Activated CD8-positive, alpha-beta memory T cell treated with anti-CD3 and anti-CD28 coated beads, Interleukin-2, amount 10 ng/mL, durations not matched to agents 7 days and 5 days (primary cell): ENCODE measurements at regions of chr11 and their contacts with region 1.

Region 1: GRCh38 chr11:46529095-46529905 is 64.5 kb downstream of the AMBRA1 start:
- DNase-seq: peak; percentile 85
- ATAC-seq: peak; percentile 92
- H3K4me3 Mint-ChIP-seq: no peak overlapping the region
- H3K27ac Mint-ChIP-seq: peak overlapping the region; percentile 3
- H3K4me1 Mint-ChIP-seq: peaks cover 14% of the 10 kb centered on the region
- H3K27me3 Mint-ChIP-seq: no peaks in the 10 kb centered on the region

Region 2: DNA sequence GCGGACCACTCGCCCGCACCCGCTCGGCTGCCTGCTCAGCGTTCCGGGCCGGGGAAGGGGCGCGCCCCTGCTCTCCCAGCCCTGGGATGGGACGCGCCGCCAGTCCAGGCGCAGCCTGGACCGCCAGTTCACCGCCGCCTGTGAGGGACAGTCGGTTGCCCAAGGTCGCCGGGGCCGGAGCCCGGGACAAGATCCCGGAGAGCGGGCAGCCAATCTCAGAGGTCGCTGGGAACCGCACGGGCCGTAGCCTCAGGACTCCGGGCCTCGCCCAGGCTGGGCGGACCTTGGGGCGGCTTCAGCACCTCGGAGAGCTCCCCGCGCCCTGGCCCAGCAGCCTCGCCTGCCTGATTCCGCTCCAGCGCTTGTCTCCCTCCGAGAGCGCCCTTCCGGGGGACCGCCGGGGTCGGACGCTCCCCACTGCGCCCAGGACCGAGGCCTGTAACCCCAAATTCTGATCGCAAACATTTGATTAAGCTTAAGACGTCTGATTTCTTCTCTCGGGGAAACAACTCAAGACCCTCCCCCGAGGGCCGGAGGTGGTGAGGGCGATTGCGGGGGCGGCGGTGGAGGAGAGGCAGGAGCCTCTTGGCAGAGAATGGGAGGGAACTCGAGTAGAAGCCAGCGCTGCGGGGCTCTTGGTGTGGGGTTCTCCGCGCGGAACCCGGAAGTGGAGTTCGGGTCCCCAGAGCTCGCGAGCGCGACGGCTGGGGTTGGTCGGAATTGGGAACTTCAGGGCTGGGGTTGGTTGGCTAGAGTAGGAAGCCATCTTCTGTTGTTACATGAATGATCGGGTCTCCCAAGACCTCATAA is 136.7 kb before region 1 on chr11:
- CTCF ChIA-PET with region 1: interaction called, 18 read pairs
- DNase-seq: peak; percentile 85
- ATAC-seq: peak; percentile 84
- H3K4me3 Mint-ChIP-seq: peak overlapping the region; percentile 51
- H3K27ac Mint-ChIP-seq: no peak overlapping the region
- H3K4me1 Mint-ChIP-seq: peaks cover 32% of the 10 kb centered on the region
- H3K27me3 Mint-ChIP-seq: peaks cover 46% of the 10 kb centered on the region

Region 3: DNA sequence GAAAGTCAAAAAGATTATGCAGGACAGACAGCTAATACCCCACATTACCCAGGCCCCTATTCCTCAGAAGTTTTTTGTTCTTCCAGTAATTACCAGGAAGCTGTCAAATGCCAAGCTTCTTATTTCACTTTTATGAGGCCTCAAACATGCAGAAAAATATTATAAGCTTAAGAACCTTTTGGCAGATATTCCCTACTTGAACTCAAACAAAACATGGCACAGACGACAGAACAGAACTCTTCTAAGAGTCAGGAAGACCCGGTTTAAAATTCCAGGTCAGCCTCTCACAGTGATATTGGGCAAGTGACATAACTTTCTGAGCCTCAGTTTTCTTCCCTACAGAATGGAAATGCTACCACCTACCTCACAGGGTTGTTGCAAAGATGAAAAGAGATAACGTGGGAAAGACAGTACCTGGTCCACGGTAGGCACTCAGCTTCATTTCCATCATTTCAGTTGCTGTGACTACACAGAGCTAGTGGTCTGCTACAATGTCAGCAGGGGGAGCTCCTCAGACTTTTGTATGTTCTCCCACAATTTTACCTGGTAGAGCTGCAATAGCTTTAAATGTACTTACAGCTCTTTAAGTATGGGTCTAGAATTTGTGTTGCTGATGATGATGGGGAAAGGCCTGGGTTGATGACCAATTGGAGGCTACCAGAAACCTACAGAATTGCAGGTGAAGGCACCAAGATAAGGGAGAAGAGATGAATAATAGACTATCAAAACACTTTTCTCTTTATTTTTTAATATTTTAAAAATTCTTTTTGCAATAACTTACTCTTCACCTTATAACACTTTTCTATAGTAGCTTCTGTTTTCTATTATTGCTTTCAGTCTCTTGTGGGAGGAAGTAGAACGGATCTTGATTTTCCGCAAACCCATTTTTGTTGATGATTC is 39.4 kb before region 1 on chr11:
- CTCF ChIA-PET with region 1: interaction called, 18 read pairs
- DNase-seq: peak; percentile 53
- ATAC-seq: peak; percentile 80
- H3K4me3 Mint-ChIP-seq: no peak overlapping the region
- H3K27ac Mint-ChIP-seq: no peak overlapping the region
- H3K4me1 Mint-ChIP-seq: peaks cover 4% of the 10 kb centered on the region
- H3K27me3 Mint-ChIP-seq: no peaks in the 10 kb centered on the region

Region 4: GRCh38 chr11:46547579-46547978 is 18.3 kb after region 1 on chr11:
- CTCF ChIA-PET with region 1: interaction called, 10 read pairs
- DNase-seq: no peak
- ATAC-seq: no peak
- H3K4me3 Mint-ChIP-seq: no peak overlapping the region
- H3K27ac Mint-ChIP-seq: no peak overlapping the region
- H3K4me1 Mint-ChIP-seq: peaks cover 1% of the 10 kb centered on the region
- H3K27me3 Mint-ChIP-seq: no peaks in the 10 kb centered on the region

Region 5: DNA sequence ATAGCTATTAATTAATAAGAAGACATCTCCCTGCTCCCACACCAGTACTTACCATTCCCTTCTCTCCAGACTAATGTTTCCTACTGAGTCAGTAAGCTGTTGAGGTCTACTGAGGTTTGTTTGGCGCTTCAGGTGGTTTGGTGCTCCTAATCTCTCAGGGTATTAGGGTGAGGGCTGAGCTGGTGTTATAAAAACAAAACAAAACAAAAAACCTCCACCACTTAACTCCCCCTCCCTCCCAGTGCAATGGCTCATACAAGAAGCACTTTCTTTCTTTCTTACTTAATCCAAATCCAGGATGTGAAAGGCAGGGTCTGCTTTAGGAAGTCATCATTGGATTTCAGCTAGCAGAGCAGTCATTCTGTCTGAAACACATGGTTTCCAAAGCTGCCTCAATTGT is 422.6 kb after region 1 on chr11:
- CTCF ChIA-PET with region 1: no interaction called
- DNase-seq: no peak
- ATAC-seq: no peak
- H3K4me3 Mint-ChIP-seq: no peak overlapping the region
- H3K27ac Mint-ChIP-seq: no peak overlapping the region
- H3K4me1 Mint-ChIP-seq: peaks cover 12% of the 10 kb centered on the region
- H3K27me3 Mint-ChIP-seq: no peaks in the 10 kb centered on the region